ENCODE measurements at regions of chr10 and their contacts with region 1.

Region 1: DNA sequence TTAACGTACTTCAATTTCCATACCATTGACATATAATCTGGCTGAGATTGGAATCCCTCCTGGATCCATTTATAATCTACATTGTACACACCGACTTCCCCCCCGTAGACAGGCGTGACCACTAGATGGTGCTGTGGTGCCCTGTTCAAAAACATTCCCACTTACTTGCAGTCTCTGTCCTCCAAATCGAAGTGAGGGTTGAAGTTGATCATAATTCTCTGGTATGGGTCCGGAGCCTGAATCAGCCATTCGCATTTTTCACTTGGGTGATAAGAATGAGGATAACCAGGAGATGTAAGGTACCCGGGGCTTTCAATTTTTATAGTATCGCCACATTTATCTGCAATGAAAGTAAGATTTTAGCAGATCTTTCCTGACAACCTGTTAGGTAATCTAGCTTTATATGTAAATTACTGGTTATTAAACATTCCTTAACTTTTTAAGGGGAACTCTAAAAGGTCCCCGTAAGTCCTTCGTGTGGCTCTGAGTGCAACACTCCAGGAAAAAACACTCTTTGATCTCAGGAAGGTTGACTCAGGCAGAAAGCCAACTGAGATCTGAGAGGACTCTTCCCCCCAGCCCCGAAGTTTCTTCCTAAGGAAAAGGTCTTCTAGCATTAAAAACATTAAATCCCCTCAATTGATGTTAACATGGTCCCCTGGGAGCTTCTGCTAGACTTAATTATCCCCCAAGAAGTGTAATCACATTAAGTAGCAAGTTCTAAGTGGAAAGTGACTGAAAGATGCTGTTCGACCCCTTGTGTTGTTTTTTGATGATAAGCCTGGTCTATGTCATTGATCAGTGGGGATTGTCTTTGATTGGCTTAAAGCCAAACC is 3.7 kb downstream of the NRP1 start:
- DNase-seq: peak; percentile 92
- H3K4me3 ChIP-seq: peak overlapping the region; percentile 23
- H3K27ac ChIP-seq: no peak overlapping the region
- H3K4me1 ChIP-seq: peaks cover 47% of the 10 kb centered on the region
- H3K27me3 ChIP-seq: no peaks in the 10 kb centered on the region
- CTCF ChIP-seq: peak; percentile 95

Region 2: DNA sequence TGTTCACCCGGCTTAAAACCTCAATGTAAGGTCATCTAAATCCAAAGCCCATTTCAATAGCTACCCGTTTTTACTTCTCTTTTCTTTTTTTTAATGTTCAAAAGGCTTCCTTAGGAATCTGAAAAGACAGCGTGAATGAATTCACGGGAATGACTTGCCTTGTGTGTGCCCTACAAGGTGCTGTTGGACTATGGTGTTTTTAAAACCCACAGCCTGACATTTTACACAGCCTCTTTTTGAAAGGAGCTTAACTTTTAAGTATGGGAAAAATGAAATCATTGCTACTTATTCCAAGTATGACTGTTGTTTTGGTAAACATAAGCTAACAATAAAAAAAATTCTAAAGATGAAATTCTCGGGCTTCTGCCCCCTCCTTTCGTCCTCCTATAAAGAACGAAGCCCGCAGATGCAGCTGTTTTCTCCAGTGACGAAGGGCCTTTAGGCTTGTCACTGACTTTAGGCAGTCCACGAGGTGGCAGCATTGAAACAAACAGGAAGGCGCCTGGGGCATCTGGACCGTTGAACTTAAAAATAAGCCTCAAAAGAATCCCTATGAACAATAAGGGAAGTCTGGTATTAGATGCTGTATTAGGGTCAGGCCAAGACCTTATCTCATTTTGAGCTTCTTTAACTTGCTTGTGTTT is 137.6 kb before region 1 on chr10:
- CTCF ChIA-PET with region 1: interaction called, 10 read pairs
- POLR2A ChIA-PET with region 1: no interaction called
- intact Hi-C with region 1: loop called (anchors 1 kb)
- DNase-seq: peak; percentile 93
- H3K4me3 ChIP-seq: no peak overlapping the region
- H3K27ac ChIP-seq: no peak overlapping the region
- H3K4me1 ChIP-seq: peaks cover 67% of the 10 kb centered on the region
- H3K27me3 ChIP-seq: no peaks in the 10 kb centered on the region
- CTCF ChIP-seq: peak; percentile 93

Region 3: DNA sequence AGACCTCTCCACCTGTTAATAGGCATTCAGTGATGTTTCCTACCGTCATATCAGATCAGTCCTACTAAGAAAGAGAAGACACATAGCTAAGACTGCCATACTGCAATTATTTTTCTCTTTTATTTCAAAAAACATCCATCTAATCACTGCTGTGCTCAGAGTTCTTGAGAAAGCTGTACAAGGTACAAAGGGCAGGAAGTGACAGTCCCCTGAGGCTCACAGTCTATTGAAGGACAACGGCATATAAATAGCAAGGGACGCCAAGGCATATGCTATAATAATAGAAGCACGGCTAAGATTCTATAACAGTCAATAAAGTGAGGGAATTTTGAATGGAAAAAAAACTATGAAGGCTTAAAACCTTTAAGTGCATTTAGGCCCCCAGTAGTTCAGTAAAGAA is 419.0 kb after region 1 on chr10:
- CTCF ChIA-PET with region 1: no interaction called
- POLR2A ChIA-PET with region 1: no interaction called
- intact Hi-C with region 1: loop called (anchors 10 kb)
- DNase-seq: peak; percentile 69
- H3K4me3 ChIP-seq: no peak overlapping the region
- H3K27ac ChIP-seq: no peak overlapping the region
- H3K4me1 ChIP-seq: peaks cover 14% of the 10 kb centered on the region
- H3K27me3 ChIP-seq: no peaks in the 10 kb centered on the region
- CTCF ChIP-seq: no peak

Region 4: DNA sequence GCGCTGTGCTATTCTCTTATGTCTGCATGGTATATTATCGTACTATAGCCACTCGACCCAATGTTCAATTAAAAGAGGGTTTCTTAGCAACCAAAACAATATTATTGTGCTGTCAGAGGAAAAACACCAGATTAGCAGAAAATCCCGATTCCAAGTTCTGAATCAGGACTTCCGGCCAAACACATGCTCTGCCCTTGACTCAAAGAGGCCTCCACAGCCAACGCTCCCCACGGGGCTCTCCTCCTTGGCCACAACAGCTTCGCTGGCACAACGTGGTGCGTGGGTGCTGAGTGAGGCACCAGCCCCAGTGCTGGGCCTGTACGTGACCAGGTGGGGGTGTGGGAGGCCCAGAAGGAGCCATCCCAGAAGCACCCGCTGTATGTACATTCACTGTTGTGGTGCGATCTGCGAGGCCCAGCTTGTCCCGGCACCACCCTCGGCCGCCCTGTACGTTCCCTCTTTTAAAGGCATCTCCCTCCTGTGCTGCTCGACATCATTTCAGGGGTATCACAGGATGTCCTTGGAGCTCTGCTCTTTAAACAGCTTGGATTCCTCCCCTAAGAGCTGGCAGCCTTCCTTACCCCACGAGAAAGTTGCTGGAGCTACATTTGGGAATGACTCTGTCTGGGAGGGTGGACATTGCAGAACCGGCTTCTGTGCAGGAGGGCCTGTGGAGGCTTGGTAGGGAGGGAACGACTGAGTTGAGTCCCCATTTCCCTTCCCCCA is 748.1 kb after region 1 on chr10:
- CTCF ChIA-PET with region 1: no interaction called
- POLR2A ChIA-PET with region 1: no interaction called
- intact Hi-C with region 1: loop called (anchors 10 kb)
- DNase-seq: no peak
- H3K4me3 ChIP-seq: no peak overlapping the region
- H3K27ac ChIP-seq: no peak overlapping the region
- H3K4me1 ChIP-seq: no peaks in the 10 kb centered on the region
- H3K27me3 ChIP-seq: no peaks in the 10 kb centered on the region
- CTCF ChIP-seq: no peak

Region 5: GRCh38 chr10:34637418-34637911 is 1306.7 kb after region 1 on chr10:
- CTCF ChIA-PET with region 1: no interaction called
- POLR2A ChIA-PET with region 1: interaction called, 4 read pairs
- intact Hi-C with region 1: loop called (anchors 1 kb)
- DNase-seq: peak; percentile 76
- H3K4me3 ChIP-seq: peak overlapping the region; percentile 10
- H3K27ac ChIP-seq: no peak overlapping the region
- H3K4me1 ChIP-seq: peaks cover 16% of the 10 kb centered on the region
- H3K27me3 ChIP-seq: no peaks in the 10 kb centered on the region
- CTCF ChIP-seq: peak; percentile 99

Measured in A673 (cell line).